ENCODE measurements at regions of chr5 and their contacts with region 1.

Region 1: GRCh38 chr5:90409318-90410177 is at the start of gene CETN3:
- DNase-seq: peak; percentile 94
- ATAC-seq: peak; percentile 96
- H3K4me3 ChIP-seq: peak within 1 kb of the TSS; percentile 91 to 98 (median 93)
- H3K27ac ChIP-seq: peak within 1 kb of the TSS; percentile 98
- H3K4me1 ChIP-seq: peaks cover 31% of the 10 kb centered on the region
- H3K27me3 ChIP-seq: no peaks in the 10 kb centered on the region; a peak in 1 of 5 replicates
- CTCF ChIP-seq: peak; percentile 39
- EP300 ChIP-seq: 0 out of 4 replicates have a peak, but pooled peaks of 1 of the 2 experiments have one; percentile 14
- POLR2A ChIP-seq: peak; percentile 92 to 97
- RAD21 ChIP-seq: no peak
- total RNA-seq, gene CETN3: 71.5 and 111 TPM in 2 replicates

Region 2: GRCh38 chr5:90398726-90399125 is 10.8 kb before region 1 on chr5:
- CTCF ChIA-PET with region 1: no interaction called
- POLR2A ChIA-PET with region 1: interaction called, 16 read pairs
- in situ Hi-C with region 1: no loop called
- intact Hi-C with region 1: loop called (anchors 2 kb)
- DNase-seq: no peak
- ATAC-seq: no peak
- H3K4me3 ChIP-seq: no peak overlapping the region
- H3K27ac ChIP-seq: no peak overlapping the region
- H3K4me1 ChIP-seq: no peaks in the 10 kb centered on the region
- H3K27me3 ChIP-seq: no peaks in the 10 kb centered on the region
- CTCF ChIP-seq: no peak
- EP300 ChIP-seq: no peak
- POLR2A ChIP-seq: no peak
- RAD21 ChIP-seq: no peak

Region 3: GRCh38 chr5:90421136-90421535 is 11.6 kb after region 1 on chr5:
- CTCF ChIA-PET with region 1: no interaction called
- POLR2A ChIA-PET with region 1: interaction called, 13 read pairs
- in situ Hi-C with region 1: no loop called
- intact Hi-C with region 1: no loop called
- DNase-seq: peak; percentile 31
- ATAC-seq: peak; percentile 100
- H3K4me3 ChIP-seq: no peak overlapping the region
- H3K27ac ChIP-seq: no peak overlapping the region
- H3K4me1 ChIP-seq: no peaks in the 10 kb centered on the region; the same call in 1 of the 2 replicates
- H3K27me3 ChIP-seq: no peaks in the 10 kb centered on the region; a peak in 1 of 5 replicates
- CTCF ChIP-seq: peak; percentile 62
- EP300 ChIP-seq: no peak
- POLR2A ChIP-seq: no peak
- RAD21 ChIP-seq: no peak

Region 4: GRCh38 chr5:90474235-90475109 is 64.9 kb after region 1 on chr5 and contains the starts of genes MBLAC2 and POLR3G:
- CTCF ChIA-PET with region 1: no interaction called
- POLR2A ChIA-PET with region 1: interaction called, 39 read pairs
- in situ Hi-C with region 1: no loop called
- intact Hi-C with region 1: loop called (anchors 1 kb)
- DNase-seq: peak; percentile 86
- ATAC-seq: peak; percentile 91
- H3K4me3 ChIP-seq: peak within 1 kb of the TSS; percentile 68 to 83 (median 81)
- H3K27ac ChIP-seq: peak within 1 kb of the TSS; percentile 94
- H3K4me1 ChIP-seq: peaks cover 43% of the 10 kb centered on the region
- H3K27me3 ChIP-seq: no peaks in the 10 kb centered on the region
- CTCF ChIP-seq: peak; percentile 63
- EP300 ChIP-seq: 0 out of 4 replicates have a peak, but pooled peaks of 1 of the 2 experiments have one; percentile 30
- POLR2A ChIP-seq: peak; percentile 88 to 89
- RAD21 ChIP-seq: peak; percentile 22; the same call in 1 of the 2 replicates
- total RNA-seq, gene MBLAC2: 4.1 and 5.7 TPM in 2 replicates
- total RNA-seq, gene POLR3G: 7.3 and 11.2 TPM in 2 replicates

Region 5: GRCh38 chr5:90529194-90529938 is 119.8 kb after region 1 on chr5 and contains the start of gene LYSMD3:
- CTCF ChIA-PET with region 1: no interaction called
- POLR2A ChIA-PET with region 1: interaction called, 9 read pairs
- in situ Hi-C with region 1: no loop called
- intact Hi-C with region 1: loop called (anchors 1 kb)
- DNase-seq: peak; percentile 92
- ATAC-seq: peak; percentile 96
- H3K4me3 ChIP-seq: peak within 1 kb of the TSS; percentile 87 to 99 (median 97)
- H3K27ac ChIP-seq: peak within 1 kb of the TSS; percentile 82
- H3K4me1 ChIP-seq: peaks cover 30% of the 10 kb centered on the region
- H3K27me3 ChIP-seq: peaks cover 0 to 4% of the 10 kb centered on the region in 2 experiments; a peak in 1 of 5 replicates
- CTCF ChIP-seq: no peak
- EP300 ChIP-seq: no peak; a peak in 1 of 4 replicates
- POLR2A ChIP-seq: peak; percentile 72 to 92; a peak in 3 of 4 replicates
- RAD21 ChIP-seq: peak; percentile 40; the same call in 1 of the 2 replicates
- total RNA-seq, gene LYSMD3: 13.8 and 22.2 TPM in 2 replicates

Region 6: DNA sequence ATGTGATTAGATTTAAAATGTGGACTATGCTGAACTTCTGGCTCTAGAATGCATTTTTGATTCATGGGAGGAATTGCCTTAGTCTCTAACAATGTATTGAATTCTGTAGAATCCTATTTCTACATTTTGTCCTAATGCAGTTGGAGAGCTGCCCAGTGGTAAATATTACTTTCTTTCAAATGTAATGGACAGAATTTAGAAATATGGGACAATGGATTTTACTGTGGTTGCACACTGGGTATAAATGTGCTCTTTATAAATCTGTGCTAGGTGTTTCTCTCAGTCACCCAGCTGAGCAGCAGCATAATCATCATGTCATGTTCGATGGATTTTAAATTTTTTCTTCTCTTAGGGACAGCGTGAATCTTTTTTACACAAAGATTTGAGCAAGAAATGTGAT is 290.8 kb after region 1 on chr5:
- CTCF ChIA-PET with region 1: no interaction called
- POLR2A ChIA-PET with region 1: no interaction called
- in situ Hi-C with region 1: no loop called
- intact Hi-C with region 1: no loop called
- DNase-seq: no peak
- ATAC-seq: no peak
- H3K4me3 ChIP-seq: no peak overlapping the region
- H3K27ac ChIP-seq: no peak overlapping the region
- H3K4me1 ChIP-seq: no peaks in the 10 kb centered on the region
- H3K27me3 ChIP-seq: no peaks in the 10 kb centered on the region
- CTCF ChIP-seq: no peak
- EP300 ChIP-seq: no peak
- POLR2A ChIP-seq: no peak
- RAD21 ChIP-seq: no peak